ENCODE measurements at regions of chr11 and their contacts with region 1.

Region 1: DNA sequence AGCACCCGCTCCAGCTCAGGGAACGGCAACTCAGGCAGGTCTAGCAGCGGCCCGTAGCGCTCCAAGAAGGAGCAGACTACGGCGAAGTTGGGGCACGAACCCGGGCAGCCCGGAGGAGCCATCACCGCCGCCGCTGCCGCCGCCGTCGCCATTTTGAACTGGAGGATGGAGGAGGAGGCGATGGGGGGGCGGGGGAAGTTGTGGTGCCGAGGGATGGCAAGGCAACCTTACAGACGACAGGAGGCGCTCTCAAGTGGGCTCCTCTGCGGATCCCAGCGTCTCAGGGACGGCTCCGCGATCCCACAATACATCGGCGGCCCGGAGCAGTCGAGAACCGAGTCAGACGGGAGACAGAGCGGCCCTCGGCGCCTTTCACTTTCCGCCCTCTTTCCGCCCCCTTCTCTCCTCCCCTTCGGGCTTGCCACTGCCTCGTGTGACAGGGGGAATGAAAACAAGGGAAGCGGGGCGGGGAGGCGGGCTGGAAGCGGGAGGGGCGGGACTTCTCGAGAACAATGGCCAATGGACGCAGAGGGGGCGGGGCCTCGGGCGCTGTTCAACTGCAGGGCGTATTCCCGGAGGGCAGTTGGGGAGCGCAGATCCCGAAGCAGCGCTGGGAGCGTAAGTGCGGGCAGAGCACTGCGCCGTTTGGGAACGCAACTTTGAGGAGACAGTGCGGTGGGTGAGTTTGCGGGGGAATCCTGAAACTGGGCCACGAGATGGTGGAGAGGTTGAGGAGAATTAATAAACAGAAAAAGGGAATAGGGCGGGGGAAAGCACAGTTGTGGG is at the starts of genes AAMDC and RSF1:
- DNase-seq: peak; percentile 89 to 98 (median 97)
- ATAC-seq: peak; percentile 92
- H3K4me3 ChIP-seq: peak within 1 kb of the TSS; percentile 97
- H3K4me3 Mint-ChIP-seq: peak within 1 kb of the TSS; percentile 89 to 100 (median 98)
- H3K27ac ChIP-seq: peak within 1 kb of the TSS; percentile 84
- H3K27ac Mint-ChIP-seq: peak within 1 kb of the TSS; percentile 93 to 99 (median 95)
- H3K4me1 ChIP-seq: peaks cover 28 to 30% of the 10 kb centered on the region in 2 donors
- H3K4me1 Mint-ChIP-seq: peaks cover 27 to 48% (median 42%) of the 10 kb centered on the region in 7 donors
- H3K27me3 ChIP-seq: no peaks in the 10 kb centered on the region
- H3K27me3 Mint-ChIP-seq: peaks cover 0 to 2% (median 0%) of the 10 kb centered on the region in 5 donors
- total RNA-seq, gene AAMDC: 5.2 to 9.2 (median 6.5) TPM
- total RNA-seq, gene RSF1: 59.0 to 113 (median 88.9) TPM

Region 2: GRCh38 chr11:76860539-76861475 is 959.9 kb before region 1 on chr11 and contains the start of gene ACER3:
- CTCF ChIA-PET with region 1: no interaction called
- POLR2A ChIA-PET with region 1: no interaction called
- intact Hi-C with region 1: loop called (anchors 2 to 5 kb)
- DNase-seq: peak; percentile 36 to 95 (median 61)
- ATAC-seq: peak; percentile 98
- H3K4me3 ChIP-seq: peak within 1 kb of the TSS; percentile 57
- H3K4me3 Mint-ChIP-seq: peak within 1 kb of the TSS; percentile 80 to 92 (median 88)
- H3K27ac ChIP-seq: peak within 1 kb of the TSS; percentile 72
- H3K27ac Mint-ChIP-seq: peak within 1 kb of the TSS; percentile 73 to 95 (median 85)
- H3K4me1 ChIP-seq: peaks cover 9 to 11% of the 10 kb centered on the region in 2 donors
- H3K4me1 Mint-ChIP-seq: peaks cover 19 to 36% (median 28%) of the 10 kb centered on the region in 7 donors
- H3K27me3 ChIP-seq: no peaks in the 10 kb centered on the region
- H3K27me3 Mint-ChIP-seq: no peaks in the 10 kb centered on the region
- total RNA-seq, gene ACER3: 4.7 to 15.2 (median 9.0) TPM

Region 3: GRCh38 chr11:77637345-77638165 is 183.2 kb before region 1 on chr11 and contains the start of gene CLNS1A:
- CTCF ChIA-PET with region 1: no interaction called
- POLR2A ChIA-PET with region 1: no interaction called
- intact Hi-C with region 1: loop called (anchors 1 kb)
- DNase-seq: peak; percentile 53 to 79 (median 75)
- ATAC-seq: peak; percentile 99
- H3K4me3 ChIP-seq: peak within 1 kb of the TSS; percentile 77
- H3K4me3 Mint-ChIP-seq: peak within 1 kb of the TSS; percentile 91 to 97 (median 96)
- H3K27ac ChIP-seq: peak within 1 kb of the TSS; percentile 87
- H3K27ac Mint-ChIP-seq: peak within 1 kb of the TSS; percentile 86 to 98 (median 95)
- H3K4me1 ChIP-seq: peaks cover 7 to 19% of the 10 kb centered on the region in 2 donors
- H3K4me1 Mint-ChIP-seq: peaks cover 34 to 49% (median 44%) of the 10 kb centered on the region in 7 donors
- H3K27me3 ChIP-seq: no peaks in the 10 kb centered on the region
- H3K27me3 Mint-ChIP-seq: no peaks in the 10 kb centered on the region
- total RNA-seq, gene CLNS1A: 82.2 to 149 (median 113) TPM

Region 4: GRCh38 chr11:77734890-77735289 is 85.9 kb before region 1 on chr11:
- CTCF ChIA-PET with region 1: no interaction called
- POLR2A ChIA-PET with region 1: no interaction called
- intact Hi-C with region 1: no loop called
- DNase-seq: no peak
- ATAC-seq: no peak
- H3K4me3 ChIP-seq: no peak overlapping the region
- H3K4me3 Mint-ChIP-seq: no peak overlapping the region
- H3K27ac ChIP-seq: no peak overlapping the region
- H3K27ac Mint-ChIP-seq: no peak overlapping the region
- H3K4me1 ChIP-seq: no peaks in the 10 kb centered on the region
- H3K4me1 Mint-ChIP-seq: peaks cover 0 to 8% (median 3%) of the 10 kb centered on the region in 7 donors
- H3K27me3 ChIP-seq: no peaks in the 10 kb centered on the region
- H3K27me3 Mint-ChIP-seq: no peaks in the 10 kb centered on the region

Region 5: GRCh38 chr11:77994412-77995362 is 173.9 kb after region 1 on chr11 and contains the start of gene INTS4:
- CTCF ChIA-PET with region 1: interaction called, 4 read pairs
- POLR2A ChIA-PET with region 1: interaction called, 24 read pairs
- intact Hi-C with region 1: loop called (anchors 1 kb)
- DNase-seq: peak; percentile 88 to 99 (median 99)
- ATAC-seq: peak; percentile 98
- H3K4me3 ChIP-seq: peak within 1 kb of the TSS; percentile 88
- H3K4me3 Mint-ChIP-seq: peak within 1 kb of the TSS; percentile 87 to 96 (median 94)
- H3K27ac ChIP-seq: peak within 1 kb of the TSS; percentile 84
- H3K27ac Mint-ChIP-seq: peak within 1 kb of the TSS; percentile 86 to 99 (median 97)
- H3K4me1 ChIP-seq: peaks cover 16 to 18% of the 10 kb centered on the region in 2 donors
- H3K4me1 Mint-ChIP-seq: peaks cover 10 to 45% (median 28%) of the 10 kb centered on the region in 7 donors
- H3K27me3 ChIP-seq: no peaks in the 10 kb centered on the region
- H3K27me3 Mint-ChIP-seq: no peaks in the 10 kb centered on the region
- total RNA-seq, gene INTS4: 54.4 to 87.0 (median 65.0) TPM

Region 6: DNA sequence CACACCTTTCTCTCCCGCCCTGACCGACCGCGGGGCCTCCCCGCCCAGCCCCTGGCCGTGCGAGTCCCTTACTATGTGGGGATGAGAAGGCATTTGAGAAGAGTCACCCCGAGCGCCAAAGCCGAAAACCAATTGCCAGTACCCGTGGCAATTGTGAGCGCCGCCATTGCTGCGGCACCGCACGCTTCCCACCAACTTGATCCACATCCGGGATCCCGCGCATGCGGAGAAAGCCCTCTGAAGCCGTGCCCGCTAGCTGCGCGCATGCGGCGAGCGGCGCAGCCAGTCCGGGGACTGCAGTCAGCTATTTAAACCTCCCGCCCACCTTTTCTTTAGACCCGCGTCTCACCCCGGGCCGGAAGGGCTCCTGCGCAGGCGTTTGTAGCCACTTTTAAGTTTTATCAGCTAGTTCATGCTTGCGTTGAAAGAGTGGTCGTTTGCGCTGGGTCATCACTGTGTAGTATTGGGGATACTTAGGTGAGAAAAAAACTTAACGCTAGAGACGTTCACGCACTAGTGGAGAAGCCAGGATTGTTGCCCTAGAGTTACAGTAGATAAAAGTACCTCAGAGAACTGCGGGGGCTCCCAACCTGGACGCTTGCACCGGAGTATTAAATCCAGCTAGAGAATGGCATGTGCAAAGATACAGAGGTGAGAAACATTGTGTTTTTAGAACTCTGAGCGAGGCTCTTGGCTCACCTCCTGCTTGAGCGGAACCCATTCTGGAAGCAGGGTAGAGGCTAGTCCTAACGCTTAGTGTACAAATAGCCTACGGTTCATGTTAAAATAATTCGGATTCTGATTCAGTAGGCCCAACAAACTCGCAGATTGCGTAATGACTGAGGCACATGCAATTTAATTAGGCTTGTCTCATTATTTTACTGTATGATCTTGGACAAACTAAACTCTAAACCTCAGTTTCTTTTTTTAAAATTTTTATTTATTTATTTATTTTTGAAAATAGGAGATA is 319.0 kb after region 1 on chr11 and contains the start of gene ALG8:
- CTCF ChIA-PET with region 1: no interaction called
- POLR2A ChIA-PET with region 1: no interaction called
- intact Hi-C with region 1: loop called (anchors 1 kb)
- DNase-seq: peak; percentile 94 to 97 (median 96)
- ATAC-seq: peak; percentile 95
- H3K4me3 ChIP-seq: peak within 1 kb of the TSS; percentile 88
- H3K4me3 Mint-ChIP-seq: peak within 1 kb of the TSS; percentile 85 to 98 (median 95)
- H3K27ac ChIP-seq: peak within 1 kb of the TSS; percentile 82
- H3K27ac Mint-ChIP-seq: peak within 1 kb of the TSS; percentile 87 to 98 (median 93)
- H3K4me1 ChIP-seq: peaks cover 8 to 13% of the 10 kb centered on the region in 2 donors
- H3K4me1 Mint-ChIP-seq: peaks cover 23 to 51% (median 42%) of the 10 kb centered on the region in 7 donors
- H3K27me3 ChIP-seq: no peaks in the 10 kb centered on the region
- H3K27me3 Mint-ChIP-seq: no peaks in the 10 kb centered on the region
- total RNA-seq, gene ALG8: 27.2 to 53.8 (median 30.8) TPM

Region 7: DNA sequence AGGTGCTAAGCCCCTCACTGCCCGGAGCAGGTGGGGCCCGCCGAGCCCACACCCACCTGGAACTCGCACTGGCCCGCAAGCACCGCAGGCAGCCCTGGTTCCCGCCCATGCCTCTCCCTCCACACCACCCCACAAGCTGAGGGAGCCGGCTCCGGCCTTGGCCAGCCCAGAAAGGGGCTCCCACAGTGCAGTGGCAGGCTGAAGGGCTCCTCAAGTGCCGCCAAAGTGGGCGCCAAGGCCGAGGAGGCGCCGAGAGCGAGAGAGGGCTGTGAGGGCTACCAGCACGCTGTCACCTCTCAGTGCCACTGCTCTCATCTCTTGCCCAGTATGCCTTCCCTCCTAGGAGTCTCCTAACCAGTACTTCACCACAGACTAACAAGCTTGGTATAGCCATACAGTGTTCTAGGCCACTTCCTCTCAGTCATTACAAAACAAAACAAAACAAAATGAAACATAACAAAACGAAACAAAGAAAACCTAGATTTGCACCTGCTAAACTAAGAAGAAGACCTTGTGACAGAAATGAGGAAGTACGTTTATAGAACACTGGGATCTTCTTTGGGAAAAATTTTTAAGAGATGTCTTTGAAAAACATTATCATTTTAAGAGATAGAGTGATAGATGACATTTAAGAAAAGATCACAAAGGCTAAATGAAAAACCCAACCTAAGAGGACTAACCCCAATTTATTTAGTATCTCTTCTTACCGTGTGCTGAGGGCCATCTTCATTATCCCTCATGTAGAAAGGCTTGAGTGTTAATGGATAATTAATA is 644.6 kb after region 1 on chr11:
- CTCF ChIA-PET with region 1: no interaction called
- POLR2A ChIA-PET with region 1: no interaction called
- intact Hi-C with region 1: loop called in 1 of 2 experiments (anchors 5 kb)
- DNase-seq: peak in 6 of 9 donors; percentile 16 to 55 (median 26)
- ATAC-seq: peak; percentile 93
- H3K4me3 ChIP-seq: no peak overlapping the region
- H3K4me3 Mint-ChIP-seq: peak overlapping the region; percentile 37 to 81 (median 64)
- H3K27ac ChIP-seq: peak overlapping the region; percentile 3
- H3K27ac Mint-ChIP-seq: peak overlapping the region; percentile 54 to 95 (median 79)
- H3K4me1 ChIP-seq: peaks cover 4 to 5% of the 10 kb centered on the region in 2 donors
- H3K4me1 Mint-ChIP-seq: peaks cover 12 to 44% (median 17%) of the 10 kb centered on the region in 7 donors
- H3K27me3 ChIP-seq: no peaks in the 10 kb centered on the region
- H3K27me3 Mint-ChIP-seq: no peaks in the 10 kb centered on the region